PC-3 (cell line): ENCODE measurements at regions of chr10 and their contacts with region 1.

Region 1: GRCh38 chr10:118568327-118568848 is 27.1 kb downstream of the PRLHR start:
- DNase-seq: peak; percentile 73
- ATAC-seq: peak; percentile 43
- H3K4me3 ChIP-seq: peak overlapping the region; percentile 38; the same call in 1 of the 2 replicates
- H3K27ac ChIP-seq: no peak overlapping the region
- H3K4me1 ChIP-seq: no peaks in the 10 kb centered on the region
- H3K27me3 ChIP-seq: no peaks in the 10 kb centered on the region
- CTCF ChIP-seq: peak; percentile 58

Region 2: GRCh38 chr10:118704711-118705110 is 136.3 kb after region 1 on chr10:
- CTCF ChIA-PET with region 1: no interaction called
- POLR2A ChIA-PET with region 1: no interaction called
- intact Hi-C with region 1: loop called (anchors 5 kb)
- DNase-seq: no peak
- ATAC-seq: no peak
- H3K4me3 ChIP-seq: no peak overlapping the region
- H3K27ac ChIP-seq: no peak overlapping the region
- H3K4me1 ChIP-seq: no peaks in the 10 kb centered on the region
- H3K27me3 ChIP-seq: no peaks in the 10 kb centered on the region
- CTCF ChIP-seq: no peak

Region 3: DNA sequence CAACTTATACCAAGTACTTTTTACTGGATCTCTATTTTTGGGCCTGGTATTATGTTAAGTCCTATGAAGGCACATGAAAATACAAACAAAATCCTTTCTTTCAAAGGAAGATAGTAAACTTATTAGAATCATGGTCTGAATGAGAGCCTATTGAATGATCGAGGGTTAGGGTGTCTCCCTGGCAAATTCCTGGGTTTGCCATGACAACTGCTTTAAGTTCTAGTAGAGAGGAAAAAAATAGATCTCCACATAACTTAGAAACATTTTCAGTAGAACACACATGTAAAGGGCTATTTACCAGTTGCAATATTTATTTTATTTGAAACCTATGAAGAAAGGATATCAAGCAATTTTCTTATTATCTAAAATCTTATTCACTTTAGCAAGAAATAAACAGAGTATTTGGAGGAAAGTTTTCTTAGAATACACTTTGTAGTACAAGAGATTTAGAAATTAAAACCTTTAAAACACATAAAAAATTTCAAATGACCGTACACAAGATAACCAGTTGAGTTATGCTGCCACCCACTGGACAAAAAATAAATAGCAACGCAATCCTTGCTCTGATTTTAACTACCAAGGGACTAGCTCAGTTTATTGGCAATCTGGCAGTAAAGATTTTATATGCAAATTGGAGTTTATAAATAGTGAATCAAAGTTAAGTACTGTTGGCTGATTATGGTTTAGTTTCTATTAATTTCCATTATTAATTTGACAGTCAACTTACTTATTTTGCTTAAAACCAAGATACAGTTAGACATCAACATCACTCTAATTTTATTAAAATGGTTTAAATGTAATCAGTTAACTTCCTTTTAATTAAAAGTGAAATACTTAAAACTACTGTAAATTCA is 152.5 kb after region 1 on chr10:
- CTCF ChIA-PET with region 1: interaction called, 19 read pairs
- POLR2A ChIA-PET with region 1: no interaction called
- intact Hi-C with region 1: loop called (anchors 1 kb)
- DNase-seq: peak; percentile 80
- ATAC-seq: no peak
- H3K4me3 ChIP-seq: no peak overlapping the region
- H3K27ac ChIP-seq: no peak overlapping the region
- H3K4me1 ChIP-seq: 0 out of 2 replicates have a peak, but pooled peaks cover 3% of the 10 kb centered on the region
- H3K27me3 ChIP-seq: no peaks in the 10 kb centered on the region
- CTCF ChIP-seq: peak; percentile 78

Region 4: DNA sequence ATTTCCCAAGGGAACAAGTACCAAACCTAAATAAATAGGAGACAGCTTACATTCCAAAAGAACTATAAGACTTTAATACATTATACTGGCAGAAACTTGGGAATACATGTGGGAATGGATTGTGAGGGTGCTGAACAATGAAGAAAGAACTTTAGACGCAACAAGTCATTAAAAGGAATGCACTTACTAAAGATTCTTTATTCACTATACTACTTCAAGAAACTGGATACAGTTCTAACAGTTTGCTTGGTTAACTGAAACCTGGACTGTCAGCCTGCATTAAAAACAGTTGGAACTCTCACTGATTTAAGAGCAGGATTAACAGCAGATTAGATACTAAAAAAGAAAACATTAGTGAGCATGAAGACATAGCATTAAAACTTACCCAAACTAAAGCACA is 174.4 kb after region 1 on chr10:
- CTCF ChIA-PET with region 1: interaction called, 10 read pairs
- POLR2A ChIA-PET with region 1: no interaction called
- intact Hi-C with region 1: no loop called
- DNase-seq: no peak
- ATAC-seq: no peak
- H3K4me3 ChIP-seq: no peak overlapping the region
- H3K27ac ChIP-seq: no peak overlapping the region
- H3K4me1 ChIP-seq: peaks cover 15% of the 10 kb centered on the region
- H3K27me3 ChIP-seq: no peaks in the 10 kb centered on the region
- CTCF ChIP-seq: no peak

Region 5: DNA sequence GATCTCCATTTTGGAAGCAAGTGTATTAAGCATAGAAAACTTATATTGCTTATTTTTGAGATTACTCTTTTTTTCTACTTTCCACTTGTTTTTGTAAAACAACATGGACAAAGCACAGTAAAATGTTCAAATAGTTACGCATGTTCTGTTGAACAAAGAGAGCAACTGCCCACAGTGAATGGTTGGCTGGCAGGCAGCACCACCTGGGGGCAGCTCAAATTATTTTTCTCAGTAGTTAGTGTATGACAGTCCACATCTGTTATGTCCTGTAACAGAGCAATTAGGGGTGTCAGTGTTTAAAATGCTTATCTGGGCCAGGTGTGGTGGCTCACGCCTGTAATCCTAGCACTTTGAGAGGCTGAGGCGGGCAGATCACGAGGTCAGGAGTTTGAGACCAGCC is 232.5 kb after region 1 on chr10:
- CTCF ChIA-PET with region 1: no interaction called
- POLR2A ChIA-PET with region 1: no interaction called
- intact Hi-C with region 1: loop called (anchors 1 kb)
- DNase-seq: peak; percentile 41
- ATAC-seq: peak; percentile 69; the same call in 1 of the 2 replicates
- H3K4me3 ChIP-seq: no peak overlapping the region
- H3K27ac ChIP-seq: no peak overlapping the region
- H3K4me1 ChIP-seq: peaks cover 21% of the 10 kb centered on the region
- H3K27me3 ChIP-seq: no peaks in the 10 kb centered on the region
- CTCF ChIP-seq: peak; percentile 66

Region 6: GRCh38 chr10:119028900-119029612 is 460.7 kb after region 1 on chr10:
- CTCF ChIA-PET with region 1: no interaction called
- POLR2A ChIA-PET with region 1: no interaction called
- intact Hi-C with region 1: loop called (anchors 5 kb)
- DNase-seq: peak; percentile 83
- ATAC-seq: peak; percentile 61
- H3K4me3 ChIP-seq: peak overlapping the region; percentile 24; the same call in 1 of the 2 replicates
- H3K27ac ChIP-seq: no peak overlapping the region
- H3K4me1 ChIP-seq: peaks cover 35% of the 10 kb centered on the region
- H3K27me3 ChIP-seq: no peaks in the 10 kb centered on the region
- CTCF ChIP-seq: no peak

Region 7: DNA sequence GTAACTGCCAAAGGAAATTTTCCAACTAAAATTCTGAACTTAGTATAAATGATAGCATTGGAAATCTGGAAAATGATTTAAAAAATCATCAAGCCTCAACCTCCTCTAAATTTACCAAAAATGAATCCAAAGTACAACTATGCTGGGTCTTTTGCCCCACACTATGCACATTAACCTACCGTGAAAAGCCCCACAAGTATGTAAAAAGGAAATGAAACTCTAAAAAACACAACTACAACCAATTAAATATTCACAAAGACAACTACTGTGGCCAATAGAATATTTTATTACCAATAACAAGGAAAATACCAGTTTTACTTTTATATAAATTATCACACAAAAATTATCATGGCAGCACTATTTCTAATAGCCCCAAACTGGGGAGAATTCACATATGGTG is 493.0 kb after region 1 on chr10:
- CTCF ChIA-PET with region 1: interaction called, 11 read pairs
- POLR2A ChIA-PET with region 1: no interaction called
- intact Hi-C with region 1: no loop called
- DNase-seq: no peak
- ATAC-seq: no peak
- H3K4me3 ChIP-seq: no peak overlapping the region
- H3K27ac ChIP-seq: no peak overlapping the region
- H3K4me1 ChIP-seq: no peaks in the 10 kb centered on the region
- H3K27me3 ChIP-seq: no peaks in the 10 kb centered on the region
- CTCF ChIP-seq: no peak